ENCODE measurements at regions of chr13 and their contacts with region 1.

Region 1: DNA sequence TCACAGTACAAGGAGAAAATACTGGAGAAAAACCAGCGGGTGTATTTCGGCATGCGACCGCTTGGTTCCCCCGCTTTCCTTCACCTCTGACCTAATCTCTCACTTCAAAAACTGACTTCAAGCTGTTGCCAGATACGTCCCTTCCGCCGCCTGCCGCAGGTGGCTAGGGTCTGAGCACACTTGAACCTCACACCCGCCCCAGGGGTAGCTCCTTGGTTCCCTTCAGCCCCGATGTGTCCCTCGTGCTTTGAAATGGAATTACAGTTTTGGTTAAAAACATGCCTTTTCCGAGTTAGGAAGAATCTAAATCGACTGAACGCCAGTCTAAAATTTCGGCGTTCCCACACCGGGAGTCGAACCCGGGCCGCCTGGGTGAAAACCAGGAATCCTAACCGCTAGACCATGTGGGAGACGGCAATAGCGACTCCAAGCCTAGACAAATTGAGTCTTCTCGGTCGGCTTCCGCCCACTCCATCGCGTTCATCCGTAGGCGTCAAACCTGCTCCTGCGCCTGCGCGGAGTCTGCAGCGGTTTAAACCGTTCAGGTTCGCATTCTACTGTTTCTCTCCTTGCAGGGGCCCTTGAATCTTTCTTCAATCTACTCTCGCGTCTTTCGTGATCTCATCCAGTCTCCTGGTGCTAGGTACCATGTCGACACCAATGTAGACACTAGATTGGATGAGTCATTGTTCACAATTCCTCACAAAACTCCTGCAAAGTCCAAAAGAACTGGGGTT is 71.5 kb downstream of the NUFIP1 start:
- DNase-seq: peak; percentile 96
- ATAC-seq: peak; percentile 77
- H3K4me3 Mint-ChIP-seq: no peak overlapping the region
- H3K27ac Mint-ChIP-seq: no peak overlapping the region
- H3K4me1 Mint-ChIP-seq: peaks cover 2% of the 10 kb centered on the region
- H3K27me3 Mint-ChIP-seq: no peaks in the 10 kb centered on the region
- CTCF ChIP-seq: no peak

Region 2: DNA sequence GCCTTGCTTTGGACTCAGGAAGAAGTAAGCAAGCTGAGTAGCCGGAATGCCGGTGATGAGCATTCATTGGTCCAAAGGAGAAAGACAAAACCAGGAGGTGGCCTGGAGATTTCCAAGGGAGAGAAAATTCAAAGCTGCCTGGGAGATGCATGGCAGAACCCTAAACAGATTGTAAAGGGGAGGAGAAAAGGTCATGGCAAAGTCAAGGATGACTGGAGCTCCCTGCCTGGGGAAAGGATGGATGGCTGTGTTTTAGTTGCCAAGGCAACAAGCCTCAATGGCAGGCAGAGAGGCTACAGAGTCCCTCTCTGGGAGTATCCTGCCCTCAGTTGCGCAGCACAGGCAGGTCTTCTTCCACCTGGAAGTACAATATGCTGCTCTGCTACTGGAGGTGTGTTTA is 1265.0 kb before region 1 on chr13:
- CTCF ChIA-PET with region 1: no interaction called
- POLR2A ChIA-PET with region 1: no interaction called
- intact Hi-C with region 1: no loop called
- DNase-seq: no peak
- ATAC-seq: no peak
- H3K4me3 Mint-ChIP-seq: no peak overlapping the region
- H3K27ac Mint-ChIP-seq: no peak overlapping the region
- H3K4me1 Mint-ChIP-seq: no peaks in the 10 kb centered on the region
- H3K27me3 Mint-ChIP-seq: peaks cover 3% of the 10 kb centered on the region
- CTCF ChIP-seq: no peak

Region 3: GRCh38 chr13:43905435-43906031 is 1012.2 kb before region 1 on chr13:
- CTCF ChIA-PET with region 1: no interaction called
- POLR2A ChIA-PET with region 1: no interaction called
- intact Hi-C with region 1: loop called (anchors 1 kb)
- DNase-seq: no peak
- ATAC-seq: peak; percentile 77
- H3K4me3 Mint-ChIP-seq: no peak overlapping the region
- H3K27ac Mint-ChIP-seq: no peak overlapping the region
- H3K4me1 Mint-ChIP-seq: no peaks in the 10 kb centered on the region
- H3K27me3 Mint-ChIP-seq: peaks cover 14% of the 10 kb centered on the region
- CTCF ChIP-seq: peak; percentile 72

Region 4: GRCh38 chr13:44274452-44275205 is 643.1 kb before region 1 on chr13:
- CTCF ChIA-PET with region 1: no interaction called
- POLR2A ChIA-PET with region 1: no interaction called
- intact Hi-C with region 1: loop called (anchors 5 kb)
- DNase-seq: no peak
- ATAC-seq: peak; percentile 86
- H3K4me3 Mint-ChIP-seq: peak overlapping the region; percentile 56
- H3K27ac Mint-ChIP-seq: peak overlapping the region; percentile 67
- H3K4me1 Mint-ChIP-seq: peaks cover 44% of the 10 kb centered on the region
- H3K27me3 Mint-ChIP-seq: peaks cover 2% of the 10 kb centered on the region
- CTCF ChIP-seq: no peak

Region 5: DNA sequence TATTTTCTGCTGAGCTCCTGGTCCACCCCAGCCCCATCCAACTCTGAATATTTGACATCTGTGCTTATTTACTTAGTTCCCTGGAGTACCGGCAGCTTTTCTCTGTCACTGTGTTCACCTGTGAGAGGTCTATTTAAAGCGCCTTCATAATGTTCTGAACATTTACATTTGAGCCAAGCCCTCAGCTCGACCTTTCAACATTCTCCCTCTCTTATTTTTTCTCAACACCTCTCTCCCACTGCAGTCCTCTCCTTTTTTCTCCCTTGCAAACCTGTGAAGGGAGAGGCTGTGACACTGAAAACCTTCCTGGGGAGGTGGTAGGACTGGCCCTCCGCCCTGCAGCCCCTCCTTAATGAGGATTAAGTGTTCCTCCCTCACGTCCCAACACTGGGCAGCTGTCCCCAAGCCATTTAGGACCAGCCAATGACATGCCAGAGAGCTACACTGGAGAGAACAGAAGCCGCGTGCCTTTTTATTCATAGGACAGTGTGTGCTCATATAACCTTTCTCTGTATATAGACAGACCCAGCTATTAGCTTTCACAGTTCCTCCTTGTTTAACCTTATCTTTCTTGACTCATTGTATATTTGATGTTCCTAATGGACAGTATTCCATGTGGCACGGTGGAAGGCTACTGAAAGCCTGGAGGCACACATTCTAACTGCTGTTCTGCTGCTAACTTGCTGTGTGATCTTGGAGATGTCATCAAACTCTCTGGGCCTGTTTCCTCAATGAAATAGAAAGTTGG is 63.3 kb before region 1 on chr13:
- CTCF ChIA-PET with region 1: no interaction called
- POLR2A ChIA-PET with region 1: no interaction called
- intact Hi-C with region 1: no loop called
- DNase-seq: no peak
- ATAC-seq: no peak
- H3K4me3 Mint-ChIP-seq: no peak overlapping the region
- H3K27ac Mint-ChIP-seq: no peak overlapping the region
- H3K4me1 Mint-ChIP-seq: no peaks in the 10 kb centered on the region
- H3K27me3 Mint-ChIP-seq: peaks cover 16% of the 10 kb centered on the region
- CTCF ChIP-seq: no peak

Region 6: GRCh38 chr13:44969551-44970484 is 52.1 kb after region 1 on chr13:
- CTCF ChIA-PET with region 1: interaction called, 4 read pairs
- POLR2A ChIA-PET with region 1: no interaction called
- intact Hi-C with region 1: loop called (anchors 1 kb)
- DNase-seq: no peak
- ATAC-seq: no peak
- H3K4me3 Mint-ChIP-seq: no peak overlapping the region
- H3K27ac Mint-ChIP-seq: no peak overlapping the region
- H3K4me1 Mint-ChIP-seq: no peaks in the 10 kb centered on the region
- H3K27me3 Mint-ChIP-seq: no peaks in the 10 kb centered on the region
- CTCF ChIP-seq: no peak

Region 7: DNA sequence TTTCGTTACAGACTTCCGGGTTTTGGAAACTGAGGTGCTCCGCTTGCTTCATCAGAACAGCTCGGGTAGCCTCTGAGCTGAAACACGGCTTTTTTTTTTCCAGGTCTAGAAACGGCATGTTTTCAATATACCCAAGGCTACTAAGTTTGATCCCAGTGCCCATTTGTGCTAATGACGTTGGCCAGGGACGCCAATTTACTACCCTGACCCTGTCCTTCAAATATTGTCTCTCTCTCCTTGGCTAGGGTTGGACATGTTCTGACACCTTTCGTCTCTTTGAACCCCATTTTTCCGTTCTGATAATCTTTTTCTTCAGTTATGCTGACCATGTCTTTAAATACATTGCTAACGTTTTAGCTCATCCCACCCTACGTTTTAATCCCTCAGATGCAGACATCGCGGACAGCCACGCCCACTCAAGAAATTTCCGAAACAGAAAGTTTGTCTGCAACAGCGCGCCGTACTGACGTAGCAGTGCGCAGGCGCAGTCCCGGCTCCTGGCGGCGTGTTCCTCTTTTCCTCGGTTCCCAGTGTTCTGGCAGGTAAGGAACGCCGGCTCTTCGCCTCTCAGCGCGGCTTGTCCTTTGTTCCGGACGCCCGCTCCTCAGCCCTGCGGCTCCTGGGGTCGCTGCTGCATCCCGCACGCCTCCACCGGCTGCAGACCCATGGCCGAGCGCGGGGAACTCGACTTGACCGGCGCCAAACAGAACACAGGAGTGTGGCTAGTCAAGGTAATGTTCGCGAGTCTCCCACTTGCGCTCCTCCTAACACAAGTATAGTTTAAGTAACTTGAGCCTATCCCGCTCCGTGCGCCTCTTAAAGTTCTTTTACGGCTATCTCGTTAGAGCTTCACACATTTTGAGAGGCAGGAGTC is 202.5 kb after region 1 on chr13 and contains the start of gene GTF2F2:
- CTCF ChIA-PET with region 1: no interaction called
- POLR2A ChIA-PET with region 1: interaction called, 4 read pairs
- intact Hi-C with region 1: loop called (anchors 1 kb)
- DNase-seq: peak; percentile 90
- ATAC-seq: peak; percentile 82
- H3K4me3 Mint-ChIP-seq: no peak within 1 kb of the TSS
- H3K27ac Mint-ChIP-seq: no peak within 1 kb of the TSS
- H3K4me1 Mint-ChIP-seq: peaks cover 9% of the 10 kb centered on the region
- H3K27me3 Mint-ChIP-seq: no peaks in the 10 kb centered on the region
- CTCF ChIP-seq: no peak
- total RNA-seq, gene GTF2F2: 19.4 and 19.8 TPM in 2 replicates

Region 8: DNA sequence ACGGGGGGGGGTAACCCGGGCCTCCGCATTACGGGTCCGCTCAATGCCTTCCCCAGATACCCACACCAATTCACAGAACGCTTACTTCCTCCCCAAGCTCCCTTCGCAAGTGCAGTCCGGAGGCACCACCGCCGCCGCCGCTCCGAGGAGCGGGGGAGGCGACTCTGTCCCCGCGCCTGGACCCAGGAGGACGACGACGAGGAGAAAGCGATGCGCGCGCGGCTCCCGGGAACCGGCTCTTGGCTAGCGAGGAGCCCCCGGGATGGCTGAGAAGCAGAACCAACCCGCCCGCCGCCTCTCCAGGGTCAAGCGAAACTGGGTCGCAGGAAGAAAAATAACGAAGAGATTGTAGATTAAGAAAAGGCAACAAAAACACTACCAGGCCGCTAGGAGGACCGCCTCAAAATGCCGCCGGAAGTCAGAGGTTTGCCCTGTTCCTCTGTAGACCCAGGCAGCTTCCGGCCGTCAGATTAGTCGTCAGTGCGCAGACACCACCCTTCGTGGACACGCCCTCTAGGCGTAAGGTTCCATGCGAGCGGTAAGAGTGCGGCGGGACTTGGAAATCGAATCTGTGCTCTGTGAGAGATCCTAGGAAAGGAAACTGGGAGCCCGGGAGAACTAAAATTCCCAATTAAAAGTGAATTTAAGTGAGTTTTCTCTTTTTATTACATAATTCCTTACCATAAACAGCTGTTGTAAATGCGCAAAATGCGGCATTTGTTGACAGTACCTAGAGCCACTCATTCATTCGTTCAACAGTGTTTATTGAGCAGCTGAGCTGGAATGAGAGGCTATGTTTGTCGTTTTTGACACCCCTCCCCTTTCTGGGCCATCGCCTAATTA is 1134.8 kb after region 1 on chr13 and contains the start of gene ZC3H13:
- CTCF ChIA-PET with region 1: no interaction called
- POLR2A ChIA-PET with region 1: no interaction called
- intact Hi-C with region 1: loop called (anchors 5 kb)
- DNase-seq: peak; percentile 76
- ATAC-seq: peak; percentile 99
- H3K4me3 Mint-ChIP-seq: peak within 1 kb of the TSS; percentile 95
- H3K27ac Mint-ChIP-seq: peak within 1 kb of the TSS; percentile 96
- H3K4me1 Mint-ChIP-seq: peaks cover 39% of the 10 kb centered on the region
- H3K27me3 Mint-ChIP-seq: peaks cover 1% of the 10 kb centered on the region
- CTCF ChIP-seq: no peak
- total RNA-seq, gene ZC3H13: 48.1 and 48.7 TPM in 2 replicates

Measured in activated B cell treated with CpG ODN at 0.5 μM for 24 hours (primary cell).